ENCODE measurements at regions of chr11 and their contacts with region 1.

Region 1: DNA sequence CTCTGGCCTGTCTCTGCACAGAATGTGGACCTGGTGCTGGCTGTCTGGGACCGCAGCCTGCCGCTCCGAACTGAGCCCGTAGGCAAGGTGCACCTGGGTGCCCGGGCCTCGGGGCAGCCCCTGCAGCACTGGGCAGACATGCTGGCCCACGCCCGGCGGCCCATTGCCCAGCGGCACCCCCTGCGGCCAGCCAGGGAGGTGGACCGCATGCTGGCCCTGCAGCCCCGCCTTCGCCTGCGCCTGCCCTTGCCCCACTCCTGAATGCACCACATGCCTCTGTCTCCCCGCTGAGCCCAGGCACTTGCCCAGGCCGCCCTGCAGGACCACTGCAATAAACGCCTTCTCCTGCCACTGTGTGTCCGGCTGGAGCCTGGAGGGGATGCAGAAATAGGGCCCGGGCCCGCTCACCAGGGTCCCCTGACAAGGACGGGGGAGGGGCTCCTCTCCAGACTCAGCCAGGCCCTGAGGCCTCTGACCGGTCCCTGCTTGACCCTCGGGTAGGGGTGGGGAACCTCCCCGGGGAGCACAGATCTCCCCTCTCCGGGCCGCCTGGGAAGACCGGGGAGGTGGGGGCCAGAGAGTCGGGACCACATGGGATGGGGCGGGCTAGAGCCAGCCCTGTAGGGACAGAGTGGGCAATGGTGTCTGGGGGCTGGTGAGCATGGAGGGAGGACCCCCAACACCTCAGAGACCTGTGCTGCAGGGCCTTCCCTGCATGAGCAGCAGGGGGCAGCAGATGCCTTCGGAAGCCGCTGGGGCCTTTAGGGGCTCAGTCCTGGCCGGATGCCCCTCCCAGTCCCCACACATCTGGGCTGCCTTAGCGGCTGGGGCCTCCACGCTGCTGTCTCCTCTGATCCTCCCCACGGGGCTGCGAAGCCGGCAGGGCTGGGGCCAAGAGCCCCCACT is 1.4 kb upstream of the TNNI2 start:
- DNase-seq: peak; percentile 82
- ATAC-seq: peak; percentile 54

Region 2: GRCh38 chr11:1659506-1659905 is 177.9 kb before region 1 on chr11:
- intact Hi-C with region 1: no loop called
- DNase-seq: no peak
- ATAC-seq: no peak

Region 3: DNA sequence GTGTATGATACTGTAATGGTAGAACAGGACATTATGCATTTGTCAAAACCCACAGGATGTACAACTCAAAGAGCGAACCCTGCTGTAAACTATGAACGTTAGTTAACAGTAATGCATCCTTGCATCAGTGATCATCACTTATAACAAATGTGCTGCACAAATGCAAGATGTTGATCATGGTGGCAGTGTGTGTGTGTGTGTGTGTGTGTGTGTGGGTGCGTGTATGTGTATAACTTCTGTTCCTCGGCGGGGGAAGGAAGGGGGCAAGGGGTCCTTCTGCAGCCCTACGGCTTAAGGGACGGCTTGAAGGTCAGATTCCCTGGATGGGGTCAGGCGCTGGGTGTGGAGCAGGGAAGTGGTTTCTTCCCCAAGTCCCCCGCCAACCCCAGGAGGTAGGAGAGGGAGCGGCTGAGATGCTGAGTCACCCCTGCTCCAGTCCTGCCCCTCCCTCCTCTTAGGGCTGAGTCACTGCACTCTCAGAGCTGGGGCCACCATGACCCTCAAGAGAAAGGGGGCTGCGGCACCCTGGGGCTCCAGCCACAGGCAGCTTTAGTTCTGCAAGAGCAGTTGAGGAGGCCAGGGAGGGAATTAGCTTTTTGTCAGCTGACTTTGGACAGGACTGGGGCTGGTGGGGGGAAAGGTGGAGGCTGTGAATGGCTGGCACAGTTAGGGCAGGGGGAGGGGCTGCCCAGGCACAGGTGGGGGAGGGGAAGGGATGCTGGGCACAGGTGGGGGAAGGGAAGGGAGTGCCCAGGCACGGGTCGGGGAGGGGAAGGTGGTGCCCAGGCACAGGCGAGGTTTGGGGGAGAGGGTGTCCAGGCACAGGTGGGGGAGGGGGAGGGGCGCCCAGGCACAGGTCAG is 64.9 kb before region 1 on chr11:
- intact Hi-C with region 1: no loop called
- DNase-seq: peak; percentile 65
- ATAC-seq: peak; percentile 83

Region 4: GRCh38 chr11:1882519-1883238 is 45.3 kb after region 1 on chr11:
- intact Hi-C with region 1: loop called (anchors 5 kb)
- DNase-seq: peak; percentile 92
- ATAC-seq: peak; percentile 79

Region 5: DNA sequence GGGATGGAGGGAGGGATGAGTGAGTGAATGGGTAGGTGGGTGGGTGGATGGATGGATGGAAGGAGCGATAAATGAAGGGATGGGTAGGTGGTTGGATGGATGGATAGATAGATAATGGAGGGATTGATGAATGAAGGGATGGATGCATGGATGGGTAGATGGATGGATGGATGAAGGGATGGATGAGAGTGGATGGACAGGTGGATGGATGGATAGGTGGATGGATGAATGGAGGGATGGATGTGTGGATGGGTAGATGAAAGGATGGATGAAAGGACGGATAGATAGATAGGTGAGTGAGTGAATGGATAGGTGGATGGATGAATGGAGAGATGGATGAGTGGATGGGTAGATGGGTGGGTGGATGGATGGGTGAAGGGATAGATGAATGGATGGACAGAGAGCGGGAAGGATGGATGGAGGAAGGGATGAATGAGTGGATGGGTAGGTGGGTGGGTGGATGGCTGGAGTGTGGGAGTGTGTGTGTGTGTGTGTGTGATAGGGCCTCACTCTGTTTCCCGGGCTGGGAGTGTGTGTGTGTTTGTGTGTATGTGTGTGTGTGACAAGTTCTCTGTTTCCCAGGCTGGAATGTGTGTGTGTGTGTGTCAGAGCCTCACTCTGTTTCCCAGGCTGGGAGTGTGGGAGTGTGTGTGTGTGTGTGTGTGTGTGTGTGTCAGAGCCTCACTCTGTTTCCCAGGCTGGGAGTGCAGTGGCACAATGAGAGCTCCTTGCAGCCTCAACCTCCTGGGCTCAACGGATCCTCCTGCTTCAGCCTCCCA is 56.3 kb after region 1 on chr11:
- intact Hi-C with region 1: no loop called
- DNase-seq: no peak
- ATAC-seq: no peak

Region 6: DNA sequence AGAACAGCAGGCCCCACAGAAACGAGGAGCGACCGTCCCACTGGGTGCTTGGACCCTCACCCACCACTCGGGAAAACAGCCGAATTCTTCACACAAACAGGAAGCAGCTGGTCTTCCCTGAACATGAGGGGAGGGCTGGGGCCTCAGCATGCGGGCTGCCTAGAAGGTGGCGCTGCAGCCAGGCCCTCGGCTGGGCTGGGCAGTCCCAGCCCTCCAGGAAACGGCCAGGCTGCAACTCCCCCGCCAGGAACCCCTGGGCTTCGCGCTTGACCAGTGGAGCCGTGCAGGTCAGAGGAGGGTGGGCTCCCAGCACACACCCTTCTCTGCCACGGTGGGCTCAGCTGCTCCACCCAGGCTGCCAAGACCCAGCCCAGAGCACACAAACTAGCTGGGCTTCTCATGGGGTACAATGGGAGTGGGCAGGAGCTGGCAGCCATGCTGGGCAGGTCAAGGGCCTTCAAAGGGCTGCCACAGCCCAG is 272.2 kb after region 1 on chr11:
- intact Hi-C with region 1: no loop called
- DNase-seq: peak; percentile 47
- ATAC-seq: peak; percentile 31

Measured in Right ventricle myocardium superior (tissue), 1 donor.